ENCODE measurements at regions of chrX and their contacts with region 1.

Region 1: DNA sequence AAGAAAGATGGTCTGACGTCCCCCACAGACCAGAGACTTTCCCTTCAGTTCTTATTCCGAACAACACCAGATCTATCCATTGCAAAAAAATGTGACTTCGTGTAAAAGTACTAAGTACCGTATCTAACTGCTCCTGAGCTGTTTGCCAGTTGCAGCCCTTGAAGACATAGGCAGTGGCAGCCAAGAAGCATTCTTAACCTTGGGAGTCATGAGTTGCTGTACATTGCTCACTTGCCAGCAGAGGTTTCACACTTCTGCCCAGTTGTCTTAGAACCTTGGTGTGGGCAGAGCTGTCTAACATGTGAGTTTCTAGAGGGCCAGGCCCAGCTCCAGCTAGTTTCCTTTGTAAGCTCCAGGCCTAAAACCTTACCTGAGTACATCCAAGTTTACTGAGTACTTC is 10.5 kb upstream of the CHRDL1 start:
- DNase-seq: no peak
- H3K4me3 ChIP-seq: no peak overlapping the region
- CTCF ChIP-seq: no peak
- POLR2A ChIP-seq: no peak

Region 2: GRCh38 chrX:109155161-109155560 is 1651.0 kb before region 1 on chrX:
- intact Hi-C with region 1: loop called (anchors 10 kb)
- DNase-seq: no peak
- H3K4me3 ChIP-seq: no peak overlapping the region
- CTCF ChIP-seq: no peak
- POLR2A ChIP-seq: no peak

Region 3: DNA sequence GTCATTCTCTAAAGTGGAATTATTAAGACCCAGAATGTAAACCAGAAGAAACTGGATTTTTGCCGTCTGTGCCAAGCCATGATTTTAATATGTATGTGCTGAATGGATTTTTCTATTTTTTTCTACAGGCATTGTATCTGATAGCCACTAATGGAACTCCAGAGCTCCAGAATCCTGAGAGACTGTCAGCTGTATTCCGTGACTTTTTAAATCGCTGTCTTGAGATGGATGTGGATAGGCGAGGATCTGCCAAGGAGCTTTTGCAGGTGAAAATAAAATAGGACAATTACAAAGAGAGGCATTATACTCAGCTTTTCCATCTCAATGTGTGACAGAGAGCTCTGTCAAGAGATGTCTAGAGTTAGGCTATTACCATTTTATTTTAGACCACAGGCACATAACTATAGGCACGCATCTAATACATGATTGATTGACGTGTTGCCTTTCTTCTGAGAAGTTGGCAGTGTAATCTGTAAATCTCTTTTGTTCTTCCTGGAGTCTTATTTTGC is 410.2 kb after region 1 on chrX:
- intact Hi-C with region 1: no loop called
- DNase-seq: no peak
- H3K4me3 ChIP-seq: no peak overlapping the region
- CTCF ChIP-seq: no peak
- POLR2A ChIP-seq: no peak